Testis (tissue), 5 donors: ENCODE measurements at regions of chr7 and their contacts with region 1.

Region 1: DNA sequence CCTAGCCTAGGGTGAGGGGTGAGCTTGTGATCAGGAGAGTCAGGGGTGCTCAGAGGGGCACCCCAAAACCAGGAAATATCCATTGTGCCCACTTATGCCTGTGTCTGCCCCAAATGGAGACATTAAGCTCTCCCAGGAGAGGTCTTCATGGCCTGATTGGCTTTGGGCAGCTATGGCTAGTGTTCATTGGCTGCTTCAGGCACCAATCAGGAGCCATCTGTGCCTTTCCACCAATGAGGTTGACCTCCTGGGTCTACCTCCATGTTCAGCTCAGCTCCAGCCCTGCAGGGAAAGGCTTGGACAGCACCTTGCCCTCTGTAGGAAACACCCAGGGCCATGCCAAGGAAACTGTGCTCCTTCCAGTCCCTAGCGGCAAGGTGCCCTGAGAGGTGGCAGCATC is 23.9 kb upstream of the HSPB1 start:
- DNase-seq: no peak
- H3K4me3 ChIP-seq: no peak overlapping the region
- H3K27ac ChIP-seq: no peak overlapping the region
- H3K4me1 ChIP-seq: peaks cover 12% of the 10 kb centered on the region
- H3K27me3 ChIP-seq: no peaks in the 10 kb centered on the region
- CTCF ChIP-seq: no peak
- POLR2A ChIP-seq: no peak

Region 2: GRCh38 chr7:76179686-76180085 is 98.9 kb before region 1 on chr7:
- intact Hi-C with region 1: loop called (anchors 10 kb)
- DNase-seq: no peak
- H3K4me3 ChIP-seq: no peak overlapping the region
- H3K27ac ChIP-seq: no peak overlapping the region
- H3K4me1 ChIP-seq: no peaks in the 10 kb centered on the region
- H3K27me3 ChIP-seq: no peaks in the 10 kb centered on the region
- CTCF ChIP-seq: no peak
- POLR2A ChIP-seq: no peak

Region 3: DNA sequence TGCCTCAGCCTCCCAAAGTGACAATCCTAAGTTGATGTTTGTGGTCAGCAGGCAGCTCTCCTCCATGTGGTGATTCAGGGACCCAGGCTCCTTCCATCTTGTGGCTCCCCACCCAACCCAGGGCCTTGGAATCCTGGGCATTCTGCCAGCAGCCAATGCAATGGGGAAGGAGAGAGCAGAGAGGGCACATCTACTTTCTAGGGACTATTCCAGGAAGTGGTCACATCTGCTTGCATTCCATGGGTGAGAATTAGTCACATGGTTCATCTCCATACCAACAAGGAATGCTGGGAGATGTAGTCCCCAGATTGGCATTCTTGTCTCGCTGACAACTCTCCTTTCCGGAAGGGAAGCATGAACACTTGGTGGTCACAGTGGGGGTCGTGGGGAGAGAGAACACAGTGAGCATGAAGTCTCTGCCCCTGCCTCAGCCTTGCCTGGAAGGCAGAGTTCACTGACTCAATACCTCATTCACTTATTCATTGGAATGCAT is 86.7 kb before region 1 on chr7:
- intact Hi-C with region 1: no loop called
- DNase-seq: no peak
- H3K4me3 ChIP-seq: no peak overlapping the region
- H3K27ac ChIP-seq: no peak overlapping the region
- H3K4me1 ChIP-seq: no peaks in the 10 kb centered on the region
- H3K27me3 ChIP-seq: no peaks in the 10 kb centered on the region
- CTCF ChIP-seq: no peak
- POLR2A ChIP-seq: no peak